ENCODE measurements at regions of chr16 and their contacts with region 1.

Region 1: DNA sequence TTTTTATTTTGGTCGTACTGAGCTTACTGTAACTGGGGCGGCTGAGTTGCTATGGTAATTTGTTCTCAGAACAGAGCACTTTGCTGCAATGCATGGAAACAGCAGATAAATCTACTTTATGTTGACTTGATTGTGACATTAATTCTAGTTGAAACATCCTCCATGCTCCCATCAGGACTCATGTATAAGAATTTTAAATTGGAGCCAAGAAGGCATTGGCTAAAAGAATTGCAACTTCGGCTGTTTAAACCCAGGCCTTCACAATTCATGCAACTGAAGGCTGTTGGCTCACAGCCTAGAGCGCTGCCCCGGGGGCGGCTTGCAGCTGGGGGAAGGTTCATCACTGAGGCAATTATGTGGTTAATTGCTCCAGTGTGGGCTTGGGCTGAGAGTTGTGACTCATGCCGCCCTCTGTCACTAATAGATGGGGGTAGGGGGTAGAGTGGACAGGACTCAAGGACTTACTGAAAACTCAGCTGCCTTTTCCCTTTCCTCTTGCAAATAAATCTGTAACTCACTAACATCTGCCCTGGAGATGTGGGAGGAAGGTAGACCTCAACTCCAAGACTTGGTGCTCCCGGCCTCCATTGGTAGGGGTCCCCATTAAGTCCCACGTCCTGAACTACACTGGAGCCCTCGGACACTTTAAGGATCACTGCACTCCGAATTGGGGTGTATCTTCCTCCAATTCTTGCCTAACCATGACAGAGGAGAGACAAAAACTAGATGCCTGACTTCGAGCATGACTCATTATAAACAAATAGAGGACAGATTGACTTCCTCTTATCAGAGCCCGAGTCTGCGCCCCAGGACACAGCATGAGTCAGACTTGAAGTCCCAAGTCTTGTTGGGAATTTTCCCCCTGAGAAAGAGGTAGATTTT is 37.5 kb downstream of the ERCC4 start:
- DNase-seq: peak; percentile 39 to 77 (median 70)
- ATAC-seq: peak; percentile 66 to 97 (median 94)
- H3K4me3 ChIP-seq: peak overlapping the region in 9 of 12 donors; percentile 2 to 51 (median 29)
- H3K27ac ChIP-seq: peak overlapping the region in 11 of 12 donors; percentile 14 to 88 (median 74)
- H3K4me1 ChIP-seq: peaks cover 0 to 32% (median 9%) of the 10 kb centered on the region in 12 donors
- H3K27me3 ChIP-seq: no peaks in the 10 kb centered on the region
- CTCF ChIP-seq: no peak
- POLR2A ChIP-seq: no peak

Region 2: GRCh38 chr16:13553453-13553985 is 403.9 kb before region 1 on chr16:
- intact Hi-C with region 1: no loop called
- DNase-seq: no peak
- ATAC-seq: no peak
- H3K4me3 ChIP-seq: no peak overlapping the region
- H3K27ac ChIP-seq: no peak overlapping the region
- H3K4me1 ChIP-seq: no peaks in the 10 kb centered on the region
- H3K27me3 ChIP-seq: peaks cover 0 to 22% (median 0%) of the 10 kb centered on the region in 9 donors
- CTCF ChIP-seq: no peak
- POLR2A ChIP-seq: no peak

Region 3: DNA sequence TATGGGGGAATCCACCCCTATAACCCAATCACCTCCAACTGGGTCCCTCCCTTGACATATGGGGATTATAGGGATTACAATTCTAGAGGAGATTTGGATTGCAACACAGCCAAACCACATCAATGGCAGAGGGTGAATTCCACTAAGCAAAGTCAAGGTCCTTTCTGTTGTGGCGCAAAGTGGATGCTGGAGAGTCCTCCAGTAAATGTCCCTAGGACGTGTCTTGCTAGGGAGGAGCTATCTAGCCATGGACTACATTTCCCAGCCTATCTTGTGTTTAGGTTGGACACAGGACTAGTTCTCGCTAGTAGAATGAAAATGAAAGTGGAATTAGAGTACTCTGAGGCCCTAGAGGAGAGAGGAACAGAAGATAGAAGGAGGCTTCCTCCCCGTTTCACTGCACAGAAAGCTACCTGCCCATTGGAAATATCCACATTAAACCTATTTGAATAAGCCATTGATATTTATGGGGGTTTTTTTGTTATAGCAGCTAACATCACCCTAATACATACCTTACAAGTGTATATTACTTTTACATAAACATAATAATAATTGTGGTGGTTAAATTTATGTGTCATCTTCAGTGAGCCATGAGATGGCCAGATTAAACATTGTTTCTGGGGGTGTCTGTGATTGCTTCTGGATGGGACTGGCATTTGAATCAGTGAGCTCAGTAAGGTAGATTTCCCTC is 94.2 kb before region 1 on chr16:
- intact Hi-C with region 1: no loop called
- DNase-seq: no peak
- ATAC-seq: no peak
- H3K4me3 ChIP-seq: no peak overlapping the region
- H3K27ac ChIP-seq: no peak overlapping the region
- H3K4me1 ChIP-seq: no peaks in the 10 kb centered on the region
- H3K27me3 ChIP-seq: peaks cover 0 to 8% (median 0%) of the 10 kb centered on the region in 9 donors
- CTCF ChIP-seq: no peak
- POLR2A ChIP-seq: no peak

Region 4: DNA sequence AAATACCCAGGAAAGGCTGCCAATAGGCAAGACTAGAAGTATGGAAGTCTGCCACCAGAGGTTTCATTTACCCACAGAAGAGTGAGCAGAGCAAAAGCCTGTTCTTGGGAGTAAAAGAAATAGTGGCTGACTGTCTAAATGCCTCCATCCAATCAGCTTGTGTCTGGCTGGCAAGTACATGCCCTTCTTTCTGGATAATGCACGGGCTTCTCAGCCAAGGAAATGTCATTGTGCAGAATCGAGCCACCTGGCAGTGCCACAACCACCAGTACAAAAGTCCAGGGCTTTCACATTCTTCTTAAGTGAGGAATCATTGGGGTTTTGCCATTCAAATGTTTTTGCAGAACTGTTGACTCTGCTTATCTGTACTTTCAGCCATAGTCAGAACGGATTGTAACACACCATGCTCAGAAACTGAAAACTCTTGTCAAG is 47.5 kb before region 1 on chr16:
- intact Hi-C with region 1: no loop called
- DNase-seq: peak in 4 of 5 donors; percentile 64 to 78 (median 70)
- ATAC-seq: peak; percentile 93 to 97 (median 96)
- H3K4me3 ChIP-seq: peak overlapping the region in 1 of 12 donors; percentile 4
- H3K27ac ChIP-seq: peak overlapping the region; percentile 49 to 89 (median 70)
- H3K4me1 ChIP-seq: peaks cover 0 to 15% (median 0%) of the 10 kb centered on the region in 12 donors
- H3K27me3 ChIP-seq: no peaks in the 10 kb centered on the region
- CTCF ChIP-seq: no peak
- POLR2A ChIP-seq: no peak

Region 5: GRCh38 chr16:14003074-14003570 is 45.7 kb after region 1 on chr16:
- intact Hi-C with region 1: loop called in 3 of 10 experiments (anchors 5 to 10 kb)
- DNase-seq: peak; percentile 74 to 83 (median 78)
- ATAC-seq: peak; percentile 41 to 75 (median 74)
- H3K4me3 ChIP-seq: peak overlapping the region in 11 of 12 donors; percentile 6 to 51 (median 37)
- H3K27ac ChIP-seq: peak overlapping the region in 11 of 12 donors; percentile 27 to 85 (median 74)
- H3K4me1 ChIP-seq: peaks cover 0 to 70% (median 47%) of the 10 kb centered on the region in 12 donors
- H3K27me3 ChIP-seq: no peaks in the 10 kb centered on the region
- CTCF ChIP-seq: peak in 6 of 12 donors; percentile 6 to 37 (median 24)
- POLR2A ChIP-seq: no peak

Region 6: DNA sequence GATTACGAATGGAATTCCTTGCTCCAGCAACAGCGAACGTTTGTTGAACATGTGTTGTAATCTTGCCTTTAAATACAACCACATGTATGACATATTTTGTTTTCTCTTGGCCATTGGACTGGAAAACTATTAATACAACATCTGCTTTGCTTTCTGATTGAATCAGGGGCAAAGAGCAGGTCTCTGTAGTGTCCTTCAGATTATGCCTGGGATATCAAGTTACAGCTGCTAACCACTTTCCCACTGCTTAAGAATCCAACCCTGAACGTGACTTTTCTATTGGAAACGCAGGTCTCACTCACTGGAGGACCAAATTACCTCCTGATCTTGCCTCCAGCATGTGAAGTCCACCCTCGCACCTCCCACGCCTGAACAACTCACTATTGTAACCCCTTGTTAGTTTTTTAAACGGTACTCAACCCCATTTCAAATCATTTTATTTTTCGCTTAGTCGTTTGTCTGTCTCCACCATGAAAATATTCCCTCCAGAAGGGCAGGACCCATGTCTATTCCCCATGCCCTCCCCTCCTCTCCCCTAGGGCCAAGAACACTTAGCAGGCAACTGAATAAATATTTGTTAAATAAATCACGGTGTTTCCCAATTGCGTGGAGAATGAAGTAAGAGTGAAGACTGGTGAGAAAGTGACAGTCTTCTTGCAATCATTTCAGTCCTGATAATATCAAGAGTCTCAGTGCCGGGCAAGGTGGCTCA is 56.3 kb after region 1 on chr16:
- intact Hi-C with region 1: loop called in 2 of 10 experiments (anchors 10 kb)
- DNase-seq: peak in 2 of 5 donors; percentile 36 to 48
- ATAC-seq: peak; percentile 56 to 74 (median 68)
- H3K4me3 ChIP-seq: peak overlapping the region in 4 of 12 donors; percentile 7 to 32 (median 10)
- H3K27ac ChIP-seq: peak overlapping the region in 11 of 12 donors; percentile 4 to 86 (median 67)
- H3K4me1 ChIP-seq: peaks cover 0 to 54% (median 30%) of the 10 kb centered on the region in 12 donors
- H3K27me3 ChIP-seq: no peaks in the 10 kb centered on the region
- CTCF ChIP-seq: no peak
- POLR2A ChIP-seq: no peak

Measured in heart left ventricle (tissue), 16 donors.